Common myeloid progenitor, CD34-positive (primary cell): ENCODE measurements at regions of chr1 and their contacts with region 1.

Region 1: DNA sequence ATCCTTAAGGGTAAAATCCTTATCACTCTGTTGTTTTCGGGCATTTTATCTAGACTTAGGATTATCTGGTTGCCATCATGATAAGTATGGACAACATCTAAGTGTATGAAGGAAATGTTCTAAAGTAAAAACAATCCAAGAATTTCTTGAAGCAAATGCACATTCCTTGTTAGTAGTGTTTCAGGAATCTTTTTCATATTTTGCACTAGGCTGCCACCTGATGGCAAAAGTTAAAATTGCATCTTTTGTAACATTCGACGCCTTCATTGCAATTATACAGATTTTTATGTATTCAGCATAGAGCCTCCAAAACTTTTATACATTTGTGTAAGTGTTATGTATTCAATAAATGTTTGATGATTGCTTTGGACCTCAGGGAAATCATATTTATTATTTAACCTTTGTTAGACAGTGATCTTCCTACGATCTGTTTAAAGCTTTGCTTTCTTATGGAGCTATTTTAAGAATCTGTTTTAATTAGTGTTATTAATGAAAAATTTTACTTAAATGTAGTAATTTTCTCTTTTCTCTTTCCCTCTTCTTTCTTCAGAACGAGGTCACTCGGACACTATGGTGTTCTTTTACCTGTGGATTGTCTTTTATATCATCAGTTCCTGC is 49.4 kb upstream of the KIAA1614 start:
- DNase-seq: peak; percentile 44 to 56 (median 45)
- H3K4me3 ChIP-seq: no peak overlapping the region
- H3K27ac ChIP-seq: no peak overlapping the region
- H3K4me1 ChIP-seq: peaks cover 0 to 5% (median 2%) of the 10 kb centered on the region in 4 experiments
- H3K27me3 ChIP-seq: no peaks in the 10 kb centered on the region

Region 2: GRCh38 chr1:180515864-180516388 is 347.3 kb before region 1 on chr1:
- CTCF ChIA-PET with region 1: interaction called, 70 read pairs
- POLR2A ChIA-PET with region 1: no interaction called
- DNase-seq: peak; percentile 60 to 80 (median 73)
- H3K4me3 ChIP-seq: no peak overlapping the region
- H3K27ac ChIP-seq: no peak overlapping the region
- H3K4me1 ChIP-seq: peaks cover 0 to 4% (median 2%) of the 10 kb centered on the region in 4 experiments
- H3K27me3 ChIP-seq: no peaks in the 10 kb centered on the region

Region 3: GRCh38 chr1:180533266-180533987 is 329.8 kb before region 1 on chr1:
- CTCF ChIA-PET with region 1: interaction called, 73 read pairs
- POLR2A ChIA-PET with region 1: no interaction called
- DNase-seq: peak; percentile 50 to 76 (median 71)
- H3K4me3 ChIP-seq: no peak overlapping the region
- H3K27ac ChIP-seq: no peak overlapping the region
- H3K4me1 ChIP-seq: no peaks in the 10 kb centered on the region
- H3K27me3 ChIP-seq: no peaks in the 10 kb centered on the region

Region 4: GRCh38 chr1:180636138-180636537 is 227.1 kb before region 1 on chr1:
- CTCF ChIA-PET with region 1: interaction called, 24 read pairs
- POLR2A ChIA-PET with region 1: no interaction called
- DNase-seq: peak in 2 of 3 donors; percentile 11 to 21
- H3K4me3 ChIP-seq: no peak overlapping the region
- H3K27ac ChIP-seq: no peak overlapping the region
- H3K4me1 ChIP-seq: peaks cover 9 to 20% (median 14%) of the 10 kb centered on the region in 4 experiments
- H3K27me3 ChIP-seq: no peaks in the 10 kb centered on the region

Region 5: DNA sequence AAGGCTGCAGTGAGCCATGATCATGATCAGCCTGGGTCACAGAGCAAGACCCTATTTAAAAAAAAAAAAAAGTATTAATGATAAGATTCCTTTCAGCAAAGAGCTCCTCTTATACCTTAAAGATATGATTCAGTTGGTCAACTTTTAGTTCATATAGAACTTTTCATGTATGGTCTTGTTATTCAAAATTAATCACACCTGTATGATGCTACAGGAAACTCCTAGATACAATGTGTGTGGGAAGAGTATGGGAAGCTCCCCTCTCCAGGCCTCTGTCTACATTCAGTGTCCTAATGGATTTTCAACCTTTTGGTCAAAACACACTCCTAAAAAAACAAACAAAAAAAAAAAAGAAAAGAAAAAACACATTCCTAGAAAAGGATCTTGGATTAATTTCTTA is 187.7 kb after region 1 on chr1:
- CTCF ChIA-PET with region 1: no interaction called
- POLR2A ChIA-PET with region 1: no interaction called
- DNase-seq: no peak
- H3K4me3 ChIP-seq: no peak overlapping the region
- H3K27ac ChIP-seq: no peak overlapping the region
- H3K4me1 ChIP-seq: peaks cover 0 to 4% (median 0%) of the 10 kb centered on the region in 4 experiments
- H3K27me3 ChIP-seq: no peaks in the 10 kb centered on the region